T-cell (primary cell): ENCODE measurements at regions of chr1 and their contacts with region 1.

Region 1: DNA sequence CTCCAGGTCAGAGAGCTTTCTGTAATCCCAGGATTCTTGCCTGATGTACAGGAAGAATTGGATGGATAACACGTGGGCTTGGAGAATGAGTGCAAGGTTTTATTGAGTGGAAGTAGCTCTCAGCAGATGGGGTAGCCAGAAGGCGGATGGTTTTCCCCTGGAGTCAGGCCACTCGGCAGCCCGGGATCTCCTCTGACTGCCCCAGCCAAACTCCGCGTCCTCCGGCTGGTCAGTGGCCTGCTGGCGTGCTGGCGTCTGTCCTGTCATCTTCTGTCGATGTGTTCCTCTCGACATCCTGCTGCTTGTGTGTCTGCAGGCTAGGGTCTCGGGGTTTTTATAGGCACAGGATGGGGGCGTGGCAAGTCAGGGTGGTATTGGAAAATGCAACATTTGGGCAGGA is 27.4 kb upstream of the GJA9 start:
- DNase-seq: no peak
- ATAC-seq: no peak
- H3K4me3 ChIP-seq: no peak overlapping the region
- H3K4me3 Mint-ChIP-seq: no peak overlapping the region
- H3K27ac ChIP-seq: no peak overlapping the region
- H3K27ac Mint-ChIP-seq: no peak overlapping the region
- H3K4me1 ChIP-seq: no peaks in the 10 kb centered on the region
- H3K4me1 Mint-ChIP-seq: no peaks in the 10 kb centered on the region
- H3K27me3 ChIP-seq: no peaks in the 10 kb centered on the region
- H3K27me3 Mint-ChIP-seq: no peaks in the 10 kb centered on the region

Region 2: DNA sequence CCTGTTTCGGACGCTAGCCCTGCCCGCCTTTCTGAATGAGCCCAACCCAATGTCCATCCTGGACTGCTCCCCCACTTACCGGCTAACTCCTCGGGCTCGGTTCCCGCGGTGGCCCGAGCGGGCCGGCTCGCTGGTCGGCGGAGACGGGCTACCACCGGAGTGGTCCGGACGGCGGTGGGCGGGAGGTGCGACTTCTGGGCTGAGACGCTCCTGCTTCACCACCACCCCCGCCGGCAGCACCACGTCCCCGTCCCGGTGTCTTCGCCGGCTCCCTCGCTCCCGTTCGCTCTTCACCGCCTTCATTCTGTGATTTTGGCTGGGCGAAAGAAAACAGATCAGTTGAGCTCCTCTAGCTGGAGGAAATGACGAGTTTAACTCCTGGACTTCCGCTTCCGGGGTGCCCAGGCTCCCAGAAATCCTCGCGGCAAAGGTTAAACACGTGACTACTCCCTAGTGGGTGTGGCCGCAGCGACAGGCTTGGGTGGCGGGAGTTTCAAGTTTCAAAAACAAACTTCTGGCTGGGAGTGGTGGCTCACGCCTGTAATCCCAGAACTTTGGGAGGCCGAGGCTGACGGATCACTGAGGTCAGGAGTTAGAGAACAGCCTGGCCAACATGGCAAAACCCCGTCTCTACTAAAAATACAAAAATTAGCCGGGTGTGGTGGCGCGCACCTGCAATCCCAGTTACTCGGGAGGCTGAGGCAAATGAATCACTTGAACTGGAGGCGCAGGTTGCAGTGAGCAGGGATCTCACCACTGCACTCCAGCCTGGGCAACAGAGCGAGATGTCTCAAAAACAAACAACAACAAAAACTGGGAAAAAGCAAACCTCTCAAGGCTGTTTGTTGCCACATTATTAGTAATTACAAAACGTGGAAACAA is 1354.7 kb before region 1 on chr1 and contains the start of gene SNIP1:
- CTCF ChIA-PET with region 1: no interaction called
- POLR2A ChIA-PET with region 1: no interaction called
- DNase-seq: peak; percentile 78 to 94 (median 90)
- ATAC-seq: peak; percentile 92 to 99 (median 97)
- H3K4me3 ChIP-seq: peak within 1 kb of the TSS; percentile 90 to 91
- H3K4me3 Mint-ChIP-seq: peak within 1 kb of the TSS; percentile 98 to 100 (median 99)
- H3K27ac ChIP-seq: peak within 1 kb of the TSS; percentile 74
- H3K27ac Mint-ChIP-seq: peak within 1 kb of the TSS; percentile 95 to 99
- H3K4me1 ChIP-seq: peaks cover 7 to 26% of the 10 kb centered on the region in 2 experiments
- H3K4me1 Mint-ChIP-seq: peaks cover 41 to 45% (median 45%) of the 10 kb centered on the region in 3 donors
- H3K27me3 ChIP-seq: peaks cover 0 to 5% of the 10 kb centered on the region in 2 experiments
- H3K27me3 Mint-ChIP-seq: peaks cover 0 to 4% of the 10 kb centered on the region in 2 donors
- total RNA-seq, gene SNIP1: 32.5 to 48.0 (median 39.9) TPM

Region 3: DNA sequence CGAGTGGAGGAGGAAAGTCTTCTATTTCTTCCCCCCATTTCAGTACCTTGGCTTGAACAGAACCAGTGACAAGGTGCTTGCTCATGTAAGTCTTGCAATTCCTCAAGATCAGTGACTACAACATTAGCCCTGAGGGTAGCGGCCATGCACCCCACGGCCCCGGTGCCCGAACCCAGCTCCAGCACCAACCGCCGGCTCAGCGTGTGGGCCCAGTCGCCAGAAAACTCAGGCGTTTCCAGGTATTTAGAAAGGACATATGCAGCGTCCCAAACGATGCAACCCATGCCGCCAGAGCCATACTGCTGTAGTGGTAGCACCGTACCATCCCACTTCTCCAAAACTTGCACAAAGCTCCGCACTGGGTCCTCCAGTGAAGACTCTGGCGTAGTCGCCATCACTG is 1126.3 kb before region 1 on chr1:
- CTCF ChIA-PET with region 1: interaction called in 1 of 2 experiments, 12 read pairs
- POLR2A ChIA-PET with region 1: no interaction called
- DNase-seq: no peak
- ATAC-seq: no peak
- H3K4me3 ChIP-seq: no peak overlapping the region
- H3K4me3 Mint-ChIP-seq: no peak overlapping the region
- H3K27ac ChIP-seq: no peak overlapping the region
- H3K27ac Mint-ChIP-seq: no peak overlapping the region
- H3K4me1 ChIP-seq: no peaks in the 10 kb centered on the region
- H3K4me1 Mint-ChIP-seq: no peaks in the 10 kb centered on the region
- H3K27me3 ChIP-seq: peaks cover 0 to 15% of the 10 kb centered on the region in 2 experiments
- H3K27me3 Mint-ChIP-seq: peaks cover 19 to 27% of the 10 kb centered on the region in 2 donors

Region 4: GRCh38 chr1:38848071-38848470 is 60.8 kb before region 1 on chr1:
- CTCF ChIA-PET with region 1: no interaction called
- POLR2A ChIA-PET with region 1: no interaction called
- DNase-seq: no peak
- ATAC-seq: no peak
- H3K4me3 ChIP-seq: no peak overlapping the region
- H3K4me3 Mint-ChIP-seq: no peak overlapping the region
- H3K27ac ChIP-seq: no peak overlapping the region
- H3K27ac Mint-ChIP-seq: no peak overlapping the region
- H3K4me1 ChIP-seq: peaks cover 0 to 3% of the 10 kb centered on the region in 2 experiments
- H3K4me1 Mint-ChIP-seq: peaks cover 20 to 27% (median 24%) of the 10 kb centered on the region in 3 donors
- H3K27me3 ChIP-seq: no peaks in the 10 kb centered on the region
- H3K27me3 Mint-ChIP-seq: no peaks in the 10 kb centered on the region

Region 5: GRCh38 chr1:38873027-38873969 is 35.5 kb before region 1 on chr1 and contains the start of gene MYCBP:
- CTCF ChIA-PET with region 1: no interaction called
- POLR2A ChIA-PET with region 1: no interaction called
- DNase-seq: peak; percentile 92 to 99 (median 96)
- ATAC-seq: peak; percentile 99
- H3K4me3 ChIP-seq: peak within 1 kb of the TSS; percentile 66 to 79
- H3K4me3 Mint-ChIP-seq: peak within 1 kb of the TSS; percentile 86 to 90 (median 90)
- H3K27ac ChIP-seq: peak within 1 kb of the TSS; percentile 43
- H3K27ac Mint-ChIP-seq: peak within 1 kb of the TSS; percentile 88 to 94
- H3K4me1 ChIP-seq: peaks cover 11% of the 10 kb centered on the region in 2 experiments
- H3K4me1 Mint-ChIP-seq: peaks cover 24 to 34% (median 33%) of the 10 kb centered on the region in 3 donors
- H3K27me3 ChIP-seq: no peaks in the 10 kb centered on the region
- H3K27me3 Mint-ChIP-seq: no peaks in the 10 kb centered on the region
- total RNA-seq, gene MYCBP: 7.0 to 19.4 (median 17.2) TPM

Region 6: GRCh38 chr1:38958967-38959366 is 50.1 kb after region 1 on chr1:
- CTCF ChIA-PET with region 1: no interaction called
- POLR2A ChIA-PET with region 1: interaction called in 1 of 2 experiments, 11 read pairs
- DNase-seq: no peak
- ATAC-seq: no peak
- H3K4me3 ChIP-seq: no peak overlapping the region
- H3K4me3 Mint-ChIP-seq: no peak overlapping the region
- H3K27ac ChIP-seq: no peak overlapping the region
- H3K27ac Mint-ChIP-seq: no peak overlapping the region
- H3K4me1 ChIP-seq: no peaks in the 10 kb centered on the region
- H3K4me1 Mint-ChIP-seq: peaks cover 4 to 7% (median 4%) of the 10 kb centered on the region in 3 donors
- H3K27me3 ChIP-seq: no peaks in the 10 kb centered on the region
- H3K27me3 Mint-ChIP-seq: no peaks in the 10 kb centered on the region

Region 7: DNA sequence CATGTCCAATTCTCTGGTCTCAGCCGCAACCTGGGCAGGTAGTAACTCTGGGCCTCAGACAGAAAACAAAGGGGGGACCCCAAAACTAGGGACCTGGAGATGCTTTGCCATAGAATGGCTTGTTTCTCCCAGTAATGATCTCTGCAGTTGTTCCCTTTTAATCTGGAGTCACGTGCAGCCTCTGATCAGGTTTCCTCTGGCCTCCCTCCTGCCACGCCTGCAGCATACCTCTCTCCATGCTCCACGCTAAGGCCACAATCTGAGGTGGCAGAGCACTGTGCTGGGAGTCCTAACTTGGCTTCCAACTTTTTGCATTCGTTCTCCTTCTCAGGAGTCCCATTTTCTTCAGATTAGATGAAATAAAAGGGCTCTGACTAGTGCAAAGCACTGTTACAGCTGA is 665.8 kb after region 1 on chr1:
- CTCF ChIA-PET with region 1: no interaction called
- POLR2A ChIA-PET with region 1: no interaction called
- DNase-seq: no peak
- ATAC-seq: no peak
- H3K4me3 ChIP-seq: peak overlapping the region; percentile 75 to 94
- H3K4me3 Mint-ChIP-seq: peak overlapping the region; percentile 83 to 89 (median 88)
- H3K27ac ChIP-seq: peak overlapping the region; percentile 56
- H3K27ac Mint-ChIP-seq: peak overlapping the region; percentile 90 to 91
- H3K4me1 ChIP-seq: peaks cover 11 to 34% of the 10 kb centered on the region in 2 experiments
- H3K4me1 Mint-ChIP-seq: peaks cover 27 to 49% (median 46%) of the 10 kb centered on the region in 3 donors
- H3K27me3 ChIP-seq: peaks cover 0 to 3% of the 10 kb centered on the region in 2 experiments
- H3K27me3 Mint-ChIP-seq: no peaks in the 10 kb centered on the region